ENCODE measurements at regions of chr2 and their contacts with region 1.

Region 1: GRCh38 chr2:70616168-70616694 is 62.6 kb upstream of the TGFA start:
- DNase-seq: peak; percentile 85
- H3K27ac ChIP-seq: peak overlapping the region; percentile 35; the same call in 1 of the 2 replicates
- CTCF ChIP-seq: no peak

Region 2: DNA sequence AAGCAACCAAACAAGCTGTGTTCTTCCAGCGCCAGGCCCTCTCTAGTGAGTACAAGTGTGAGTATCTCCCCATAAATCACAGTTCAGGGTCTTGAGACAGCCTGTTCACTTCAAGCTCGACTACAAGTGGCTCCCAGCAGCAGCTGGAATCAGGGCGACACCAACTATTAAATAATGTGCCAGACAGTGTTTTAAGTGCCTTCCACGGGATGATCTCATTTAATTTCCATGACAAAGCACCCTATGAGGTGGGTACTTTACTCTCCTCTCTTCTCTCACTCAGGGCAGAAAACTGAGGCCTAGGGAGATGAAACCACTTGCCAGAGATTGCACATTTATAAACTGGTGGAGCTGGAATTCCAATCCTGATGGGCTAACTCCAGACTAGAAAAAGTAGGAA is 311.7 kb before region 1 on chr2:
- CTCF ChIA-PET with region 1: interaction called, 18 read pairs
- POLR2A ChIA-PET with region 1: no interaction called
- DNase-seq: no peak
- H3K27ac ChIP-seq: no peak overlapping the region
- CTCF ChIP-seq: no peak

Region 3: GRCh38 chr2:70328921-70329561 is 287.2 kb before region 1 on chr2:
- CTCF ChIA-PET with region 1: no interaction called
- POLR2A ChIA-PET with region 1: no interaction called
- DNase-seq: peak; percentile 95
- H3K27ac ChIP-seq: peak overlapping the region; percentile 72
- CTCF ChIP-seq: no peak

Region 4: DNA sequence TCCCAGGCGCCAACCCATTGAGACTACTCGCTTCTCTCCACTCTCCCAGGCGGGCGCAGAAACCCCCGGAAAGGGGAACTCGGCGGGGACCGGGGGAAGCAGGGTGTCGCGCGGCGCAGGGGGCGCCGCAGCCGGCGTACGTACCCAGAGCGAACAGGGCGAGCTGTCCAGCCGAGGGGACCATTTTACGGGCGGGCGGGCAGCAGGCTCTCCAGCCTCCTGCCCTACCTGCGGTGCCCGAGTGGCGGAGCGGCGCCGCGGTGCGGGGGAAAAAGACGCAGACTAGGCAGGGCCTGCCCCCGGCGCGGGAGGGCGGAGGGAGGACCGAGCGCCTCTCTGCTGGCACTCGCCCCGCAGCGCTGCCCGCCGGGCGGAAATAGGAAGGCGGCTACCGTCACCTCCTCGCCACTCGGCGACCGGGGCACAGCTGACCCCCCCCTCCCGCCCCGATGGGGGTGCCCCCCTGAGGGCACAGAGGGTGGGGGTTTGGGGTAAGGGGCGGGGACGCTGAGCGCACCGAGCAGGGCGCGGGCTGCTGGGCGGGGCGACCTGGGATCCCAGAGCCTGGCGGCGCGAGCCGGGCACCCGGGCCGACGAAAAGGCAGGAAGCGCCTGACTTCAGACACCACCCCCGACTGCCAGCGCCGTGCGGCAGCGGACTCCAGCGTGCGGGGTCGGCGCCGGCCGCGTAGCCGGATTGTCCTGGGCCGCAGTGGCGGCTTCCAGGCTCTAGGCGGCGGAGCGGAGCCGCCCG is 62.5 kb before region 1 on chr2 and contains the start of gene TGFA:
- CTCF ChIA-PET with region 1: interaction called, 31 read pairs
- POLR2A ChIA-PET with region 1: no interaction called
- DNase-seq: peak; percentile 83
- H3K27ac ChIP-seq: peak within 1 kb of the TSS; percentile 96
- CTCF ChIP-seq: peak; percentile 88